HepG2 (cell line): ENCODE measurements at regions of chr4 and their contacts with region 1.

Region 1: DNA sequence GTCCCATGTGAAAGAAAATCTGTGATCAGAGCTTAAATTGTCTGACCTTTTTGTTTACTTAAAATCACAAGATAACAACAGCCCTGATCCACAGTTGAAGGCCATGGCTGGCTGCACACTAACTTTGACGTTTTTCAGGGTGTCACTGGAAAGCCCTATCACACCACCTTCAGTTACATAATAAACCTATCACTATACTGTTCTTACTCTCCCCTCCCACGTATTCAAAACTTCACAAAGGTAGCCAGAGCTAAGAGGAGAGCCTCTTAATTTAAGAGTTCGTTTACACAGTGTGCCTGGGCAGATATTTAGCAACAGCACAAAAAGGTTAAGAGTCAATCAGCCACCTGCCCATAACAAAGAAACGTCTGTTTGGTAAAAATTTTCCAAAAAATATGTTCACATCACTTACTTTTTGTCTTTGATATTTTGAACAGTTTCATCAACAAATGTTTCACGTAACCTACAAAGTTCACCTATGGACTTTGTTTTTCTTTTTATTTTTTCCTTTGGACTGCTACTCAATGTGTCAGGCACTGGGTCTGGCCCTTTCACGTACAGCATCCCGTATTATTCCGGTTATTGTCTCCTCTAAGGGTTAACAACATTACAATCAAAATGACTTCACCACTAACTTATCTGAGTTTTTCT is 25.0 kb downstream of the RFC1 start:
- DNase-seq: peak; percentile 96
- ATAC-seq: peak; percentile 97
- H3K4me3 ChIP-seq: peak overlapping the region in 1 of 3 experiments; percentile 27; a peak in 1 of 6 replicates
- H3K27ac ChIP-seq: peak overlapping the region; percentile 80
- H3K4me1 ChIP-seq: peaks cover 78% of the 10 kb centered on the region
- H3K27me3 ChIP-seq: no peaks in the 10 kb centered on the region
- CTCF ChIP-seq: no peak
- EP300 ChIP-seq: peak; percentile 15 to 84; a peak in 3 of 4 replicates
- POLR2A ChIP-seq: no peak
- RAD21 ChIP-seq: no peak

Region 2: DNA sequence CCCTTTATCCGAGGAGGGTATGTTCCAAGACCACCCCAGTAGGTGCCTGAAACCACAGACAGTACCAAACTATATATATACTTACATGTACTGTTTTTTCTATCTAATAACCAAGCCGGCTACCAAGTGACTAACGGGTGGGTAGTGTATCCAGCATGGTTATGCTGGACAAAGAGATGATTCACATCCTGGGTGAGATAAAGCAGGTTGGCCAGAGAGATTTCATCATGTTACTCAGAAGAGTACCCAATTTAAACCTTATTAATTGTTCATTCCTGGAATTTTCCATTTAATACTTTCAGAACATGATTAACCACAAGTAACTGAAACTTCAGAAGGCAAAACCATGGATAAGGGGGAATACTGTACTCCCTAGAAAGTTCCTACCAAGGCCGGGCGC is 21.5 kb before region 1 on chr4:
- CTCF ChIA-PET with region 1: no interaction called
- POLR2A ChIA-PET with region 1: no interaction called
- in situ Hi-C with region 1: no loop called
- intact Hi-C with region 1: no loop called
- DNase-seq: peak; percentile 38
- ATAC-seq: no peak
- H3K4me3 ChIP-seq: no peak overlapping the region
- H3K27ac ChIP-seq: no peak overlapping the region
- H3K4me1 ChIP-seq: peaks cover 33% of the 10 kb centered on the region
- H3K27me3 ChIP-seq: no peaks in the 10 kb centered on the region
- CTCF ChIP-seq: no peak
- EP300 ChIP-seq: no peak
- POLR2A ChIP-seq: no peak
- RAD21 ChIP-seq: no peak

Region 3: DNA sequence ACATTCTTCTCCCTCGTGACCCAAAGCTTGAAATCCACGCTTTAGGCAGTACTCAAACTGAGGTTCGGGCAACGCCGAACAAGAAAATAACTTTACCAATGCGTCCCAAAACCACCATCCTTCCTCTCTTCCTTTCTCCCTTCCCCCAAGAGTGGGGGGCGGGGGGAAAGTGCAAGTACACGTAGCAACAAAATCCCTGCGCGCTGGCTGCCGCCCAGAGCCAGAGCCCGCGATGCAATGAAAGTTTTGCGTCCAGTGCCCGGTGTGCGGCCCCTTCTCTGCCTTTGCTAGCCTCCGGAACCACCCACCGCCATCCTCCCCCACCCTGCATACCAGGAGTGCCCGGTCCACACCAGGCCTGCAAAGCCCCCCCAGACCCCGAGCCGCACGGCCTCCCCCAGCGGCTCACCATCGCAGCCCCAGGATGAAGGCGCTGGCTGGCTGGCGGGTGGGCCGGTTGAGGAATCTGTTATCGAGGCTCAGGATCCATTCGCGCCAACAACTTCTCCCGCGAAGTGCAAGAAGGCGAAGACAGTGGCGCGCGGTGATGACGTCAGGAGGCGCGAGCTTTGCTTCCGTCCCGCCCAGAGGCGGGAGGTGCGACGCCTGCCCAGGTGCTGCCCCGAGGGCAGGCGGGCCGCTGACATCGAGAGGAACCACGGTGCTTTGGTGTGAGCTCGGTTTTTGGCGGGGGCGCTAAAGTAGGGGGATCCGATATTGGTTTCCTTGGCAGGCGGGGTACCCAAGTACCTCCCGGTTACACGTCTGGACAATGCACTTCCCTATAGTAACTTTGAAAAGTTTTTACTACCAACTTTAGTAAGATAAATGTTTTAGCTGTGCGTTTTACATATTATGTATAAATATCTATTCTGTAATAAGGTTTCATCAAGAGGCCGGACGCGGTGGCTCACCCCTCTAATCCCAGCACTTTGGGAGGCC is 24.9 kb after region 1 on chr4 and contains the start of gene RFC1:
- CTCF ChIA-PET with region 1: no interaction called
- POLR2A ChIA-PET with region 1: interaction called, 20 read pairs
- in situ Hi-C with region 1: no loop called
- intact Hi-C with region 1: no loop called
- DNase-seq: peak; percentile 87
- ATAC-seq: peak; percentile 81
- H3K4me3 ChIP-seq: peak within 1 kb of the TSS; percentile 76 to 85 (median 84)
- H3K27ac ChIP-seq: peak within 1 kb of the TSS; percentile 88
- H3K4me1 ChIP-seq: peaks cover 47% of the 10 kb centered on the region
- H3K27me3 ChIP-seq: no peaks in the 10 kb centered on the region; a peak in 1 of 5 replicates
- CTCF ChIP-seq: no peak; the same call in 1 of the 2 replicates
- EP300 ChIP-seq: no peak
- POLR2A ChIP-seq: peak; percentile 65 to 77
- RAD21 ChIP-seq: 0 out of 2 replicates have a peak, but pooled peaks have one; percentile 14
- total RNA-seq, gene RFC1: 78.8 and 118 TPM in 2 replicates

Region 4: GRCh38 chr4:39375478-39375877 is 34.3 kb after region 1 on chr4:
- CTCF ChIA-PET with region 1: no interaction called
- POLR2A ChIA-PET with region 1: interaction called, 5 read pairs
- in situ Hi-C with region 1: no loop called
- intact Hi-C with region 1: loop called (anchors 5 kb)
- DNase-seq: peak; percentile 89
- ATAC-seq: peak; percentile 97
- H3K4me3 ChIP-seq: peak overlapping the region in 1 of 3 experiments; percentile 42; a peak in 1 of 6 replicates
- H3K27ac ChIP-seq: peak overlapping the region; percentile 75
- H3K4me1 ChIP-seq: peaks cover 24% of the 10 kb centered on the region
- H3K27me3 ChIP-seq: no peaks in the 10 kb centered on the region
- CTCF ChIP-seq: no peak
- EP300 ChIP-seq: peak in 1 of 2 experiments; percentile 89; a peak in 2 of 4 replicates
- POLR2A ChIP-seq: no peak
- RAD21 ChIP-seq: no peak

Region 5: DNA sequence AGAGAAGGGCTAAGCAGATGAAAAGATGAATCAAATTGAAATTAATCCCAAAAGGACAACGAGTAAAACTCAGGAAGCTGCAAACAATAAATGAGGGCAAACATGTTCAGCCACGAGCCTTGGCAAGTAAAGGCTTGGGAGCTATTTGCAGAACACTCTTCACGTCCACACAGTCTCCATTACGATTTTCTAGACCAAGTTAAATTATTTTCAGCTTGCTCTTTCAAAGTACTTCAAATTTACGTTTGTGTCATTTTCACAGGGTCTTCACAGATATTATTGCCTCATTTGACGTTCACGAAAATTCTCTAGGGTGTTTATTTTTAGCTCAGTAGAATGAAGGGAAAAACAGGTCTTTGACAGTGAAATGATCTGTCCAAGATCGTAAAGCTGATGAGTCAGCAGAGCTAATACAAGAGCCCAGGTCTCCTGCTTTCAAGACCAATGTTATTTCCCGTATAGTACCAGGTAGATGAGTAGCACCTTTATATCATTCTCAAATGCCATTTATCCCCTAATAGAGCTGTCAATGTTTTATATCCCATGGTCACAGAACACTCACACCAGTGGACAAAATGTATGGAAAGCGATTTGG is 86.4 kb after region 1 on chr4:
- CTCF ChIA-PET with region 1: no interaction called
- POLR2A ChIA-PET with region 1: interaction called, 14 read pairs
- in situ Hi-C with region 1: no loop called
- intact Hi-C with region 1: loop called (anchors 1 kb)
- DNase-seq: no peak
- ATAC-seq: no peak
- H3K4me3 ChIP-seq: no peak overlapping the region; a peak in 1 of 6 replicates
- H3K27ac ChIP-seq: peak overlapping the region; percentile 52
- H3K4me1 ChIP-seq: peaks cover 89% of the 10 kb centered on the region
- H3K27me3 ChIP-seq: no peaks in the 10 kb centered on the region
- CTCF ChIP-seq: no peak
- EP300 ChIP-seq: no peak
- POLR2A ChIP-seq: no peak
- RAD21 ChIP-seq: no peak